Esophagus squamous epithelium (tissue), 5 donors: ENCODE measurements at regions of chr1 and their contacts with region 1.

Region 1: DNA sequence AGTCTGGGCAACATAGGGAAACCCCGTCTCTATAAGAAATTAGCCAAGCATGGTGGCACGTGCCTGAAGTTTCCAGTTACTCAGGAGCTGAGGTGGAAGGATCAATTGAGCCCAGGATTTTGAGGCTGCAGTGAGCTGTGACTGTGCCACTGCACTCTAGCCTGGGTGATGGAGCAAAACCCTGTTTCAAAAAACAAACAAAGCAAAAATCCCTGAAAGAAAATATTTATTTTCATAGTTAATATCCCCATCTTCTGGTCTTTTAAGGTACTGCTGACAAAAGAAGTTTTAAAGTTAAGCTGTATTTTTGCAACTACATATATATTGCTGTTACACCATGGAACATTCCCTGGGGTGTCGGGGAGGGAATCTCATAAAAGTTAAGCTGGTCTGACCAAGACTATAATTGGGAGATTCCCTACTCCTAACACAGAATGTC is 26.0 kb downstream of the VAMP4 start:
- DNase-seq: no peak
- H3K4me3 ChIP-seq: no peak overlapping the region
- H3K27ac ChIP-seq: peak overlapping the region in 2 of 4 donors; percentile 17 to 21
- H3K4me1 ChIP-seq: peaks cover 0 to 21% (median 3%) of the 10 kb centered on the region in 3 donors
- H3K27me3 ChIP-seq: no peaks in the 10 kb centered on the region
- CTCF ChIP-seq: peak; percentile 9 to 58 (median 33)
- POLR2A ChIP-seq: no peak

Region 2: DNA sequence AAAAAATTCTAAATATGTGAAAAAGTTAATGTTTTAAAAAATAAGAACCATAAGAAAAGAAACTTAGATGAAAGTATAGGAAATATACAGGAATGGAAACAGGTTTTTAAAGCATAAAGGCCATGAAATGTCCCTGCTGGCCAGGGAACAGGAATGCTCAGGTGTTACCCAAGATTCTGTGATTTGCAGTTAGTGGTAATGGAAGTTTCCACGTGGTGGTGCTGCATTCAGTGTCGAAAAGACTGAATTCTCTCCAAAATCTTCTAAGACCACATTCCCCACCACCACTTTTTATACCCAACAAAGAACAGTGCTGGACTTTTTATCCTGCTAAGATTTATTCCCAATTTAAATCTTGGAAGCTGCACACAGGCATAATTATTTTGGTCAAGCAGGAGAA is 925.7 kb before region 1 on chr1:
- intact Hi-C with region 1: no loop called
- DNase-seq: no peak
- H3K4me3 ChIP-seq: no peak overlapping the region
- H3K27ac ChIP-seq: no peak overlapping the region
- H3K4me1 ChIP-seq: peaks cover 0 to 4% (median 0%) of the 10 kb centered on the region in 3 donors
- H3K27me3 ChIP-seq: no peaks in the 10 kb centered on the region
- CTCF ChIP-seq: no peak
- POLR2A ChIP-seq: no peak

Region 3: GRCh38 chr1:171644805-171645483 is 70.9 kb before region 1 on chr1:
- intact Hi-C with region 1: loop called (anchors 10 kb)
- DNase-seq: no peak
- H3K4me3 ChIP-seq: peak overlapping the region in 1 of 4 donors; percentile 43
- H3K27ac ChIP-seq: peak overlapping the region in 3 of 4 donors; percentile 33 to 81 (median 77)
- H3K4me1 ChIP-seq: peaks cover 5 to 16% (median 16%) of the 10 kb centered on the region in 3 donors
- H3K27me3 ChIP-seq: no peaks in the 10 kb centered on the region
- CTCF ChIP-seq: peak; percentile 21 to 74 (median 58)
- POLR2A ChIP-seq: no peak